PC-3 (cell line): ENCODE measurements at regions of chr12 and their contacts with region 1.

Region 1: DNA sequence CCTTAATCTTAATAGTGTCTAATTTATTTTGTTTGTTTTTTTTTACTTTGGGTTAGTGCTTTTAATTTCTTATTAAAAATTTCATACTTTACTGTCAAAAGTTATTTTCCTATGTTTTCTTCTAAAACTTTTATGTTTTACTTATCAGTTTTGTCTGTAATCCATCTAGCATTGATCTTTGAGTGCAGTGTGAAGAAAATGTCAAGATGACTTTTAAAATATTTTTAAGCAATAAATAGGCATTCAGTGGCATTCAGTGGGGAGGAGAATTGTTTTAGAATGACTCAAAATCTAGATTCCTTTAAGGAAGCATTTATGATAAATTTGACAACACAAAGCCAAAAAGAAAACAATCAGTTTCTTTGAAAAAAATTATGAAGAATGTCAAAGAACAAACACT is 324.9 kb downstream of the ATXN7L3B start:
- DNase-seq: peak; percentile 7
- ATAC-seq: no peak; the same call in 1 of the 2 replicates
- H3K4me3 ChIP-seq: no peak overlapping the region
- H3K27ac ChIP-seq: no peak overlapping the region
- H3K4me1 ChIP-seq: peaks cover 3% of the 10 kb centered on the region; the same call in 1 of the 2 replicates
- H3K27me3 ChIP-seq: no peaks in the 10 kb centered on the region
- CTCF ChIP-seq: no peak

Region 2: GRCh38 chr12:74890237-74890599 is 27.7 kb after region 1 on chr12:
- CTCF ChIA-PET with region 1: no interaction called
- POLR2A ChIA-PET with region 1: no interaction called
- intact Hi-C with region 1: loop called (anchors 2 kb)
- DNase-seq: peak; percentile 95
- ATAC-seq: peak; percentile 94
- H3K4me3 ChIP-seq: peak overlapping the region; percentile 61
- H3K27ac ChIP-seq: peak overlapping the region; percentile 97
- H3K4me1 ChIP-seq: peaks cover 40% of the 10 kb centered on the region
- H3K27me3 ChIP-seq: no peaks in the 10 kb centered on the region
- CTCF ChIP-seq: no peak

Region 3: GRCh38 chr12:75081305-75081704 is 218.8 kb after region 1 on chr12:
- CTCF ChIA-PET with region 1: interaction called, 16 read pairs
- POLR2A ChIA-PET with region 1: no interaction called
- intact Hi-C with region 1: no loop called
- DNase-seq: no peak
- ATAC-seq: peak; percentile 57
- H3K4me3 ChIP-seq: no peak overlapping the region
- H3K27ac ChIP-seq: no peak overlapping the region
- H3K4me1 ChIP-seq: no peaks in the 10 kb centered on the region
- H3K27me3 ChIP-seq: peaks cover 13% of the 10 kb centered on the region; the same call in 1 of the 2 replicates
- CTCF ChIP-seq: no peak